ENCODE measurements at regions of chr1 and their contacts with region 1.

Region 1: DNA sequence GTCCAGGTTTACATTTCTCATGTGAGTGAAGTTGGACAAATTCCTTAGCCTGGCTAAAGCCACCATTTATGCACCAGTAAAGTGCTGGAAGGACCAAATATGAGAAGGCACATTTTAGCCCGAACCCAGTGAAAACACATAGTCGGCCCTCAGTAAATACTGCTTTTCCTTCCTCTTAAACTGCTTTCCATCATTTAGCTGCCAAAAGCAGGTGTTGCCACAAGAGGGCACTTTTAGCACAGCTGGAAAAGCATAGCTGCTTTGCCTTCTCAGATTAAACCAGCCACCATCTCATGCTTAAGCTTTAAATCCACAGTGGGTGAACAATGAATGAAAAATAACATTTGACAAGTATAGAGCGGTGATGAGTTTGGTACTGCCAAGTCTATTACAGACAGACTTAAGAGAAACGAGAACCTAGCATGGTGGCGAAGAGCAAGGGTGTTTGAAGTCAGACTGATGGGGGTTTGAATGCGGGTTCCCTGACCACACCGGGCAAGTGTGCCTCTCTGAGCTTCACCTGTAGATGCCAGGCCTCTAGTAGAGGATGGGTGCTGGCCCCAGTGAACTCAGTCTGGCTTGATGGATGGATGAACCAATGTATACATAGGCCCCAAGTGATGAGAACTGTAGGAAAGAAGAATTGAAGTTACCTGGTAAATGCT is 57.8 kb downstream of the SLC35D1 start:
- DNase-seq: peak; percentile 40
- CTCF ChIP-seq: peak; percentile 77

Region 2: GRCh38 chr1:67149179-67149770 is 153.1 kb after region 1 on chr1:
- in situ Hi-C with region 1: loop called (anchors 10 kb)
- DNase-seq: peak; percentile 73
- CTCF ChIP-seq: peak; percentile 56

Region 3: DNA sequence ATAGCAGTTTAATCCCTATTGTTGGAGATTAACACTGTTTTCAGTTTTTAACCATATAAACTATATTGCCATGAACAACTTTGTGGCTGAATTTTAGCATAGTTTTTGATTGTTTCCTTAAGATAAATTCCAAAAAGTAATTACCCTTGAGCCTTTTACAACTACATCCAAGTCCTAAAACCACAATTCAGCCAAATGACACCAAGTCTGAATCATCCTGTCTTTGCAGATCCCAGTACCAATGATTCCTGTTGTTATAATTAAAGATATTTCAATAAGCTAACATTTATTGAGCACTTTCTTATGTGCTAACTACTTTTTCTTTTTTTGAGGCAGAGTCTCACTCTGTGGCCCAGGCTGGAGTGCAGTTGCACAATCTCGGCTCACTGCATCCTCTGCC is 205.7 kb after region 1 on chr1:
- in situ Hi-C with region 1: loop called (anchors 10 kb)
- DNase-seq: no peak
- CTCF ChIP-seq: no peak